ENCODE measurements at regions of chr5 and their contacts with region 1.

Region 1: DNA sequence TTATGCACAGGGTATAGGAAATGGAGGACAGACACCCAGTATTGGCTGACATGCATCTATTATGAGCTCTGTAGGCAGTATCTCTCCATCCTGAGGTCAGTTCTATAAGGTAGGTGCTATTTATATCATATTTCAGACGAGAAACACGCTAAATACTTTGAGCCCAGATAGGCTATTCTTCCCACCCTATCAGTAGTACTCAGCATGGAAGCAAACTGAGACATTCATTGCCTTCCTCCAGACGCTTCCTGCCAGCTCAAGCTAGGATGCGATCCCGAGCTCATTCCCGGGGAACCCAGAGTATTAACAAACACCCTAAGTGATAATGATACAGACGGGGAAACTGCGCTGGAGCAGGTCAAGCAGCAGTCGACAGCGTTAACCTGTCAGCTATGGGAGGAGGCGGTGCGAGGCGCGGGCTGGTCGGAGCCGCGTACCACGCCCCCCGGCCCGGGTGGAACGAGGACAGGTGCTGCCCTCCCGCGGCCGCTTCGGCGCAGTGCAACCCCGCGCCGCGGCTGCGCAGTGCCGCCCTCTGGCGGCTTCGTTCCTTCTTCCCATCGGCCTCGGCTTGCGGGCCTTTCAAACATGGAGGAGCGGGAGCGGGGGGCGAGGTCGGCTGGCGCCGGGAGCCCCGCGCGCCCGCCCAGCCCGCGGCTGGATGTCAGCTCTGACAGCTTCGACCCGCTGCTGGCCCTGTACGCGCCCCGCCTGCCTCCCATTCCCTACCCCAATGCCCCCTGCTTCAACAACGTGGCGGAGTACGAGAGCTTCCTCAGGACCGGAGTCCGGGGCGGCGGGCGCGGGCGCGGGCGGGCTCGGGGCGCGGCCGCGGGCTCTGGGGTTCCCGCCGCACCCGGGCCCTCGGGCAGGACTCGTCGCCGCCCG is at the start of gene LSM11:
- DNase-seq: peak; percentile 76 to 91 (median 84)
- H3K4me3 ChIP-seq: peak within 1 kb of the TSS; percentile 52 to 90 (median 78)
- H3K27ac ChIP-seq: peak within 1 kb of the TSS in 50 of 59 donors; percentile 12 to 87 (median 62)
- H3K27me3 ChIP-seq: no peaks in the 10 kb centered on the region
- CTCF ChIP-seq: peak in 55 of 56 donors; percentile 86 to 100 (median 100)
- total RNA-seq, gene LSM11: 6.5 to 28.4 (median 16.7) TPM

Region 2: GRCh38 chr5:157142317-157143126 is 600.9 kb before region 1 on chr5 and contains the start of gene MED7:
- intact Hi-C with region 1: loop called in 1 of 2 experiments (anchors 10 kb)
- DNase-seq: peak; percentile 71 to 96 (median 94)
- H3K4me3 ChIP-seq: peak within 1 kb of the TSS; percentile 63 to 100 (median 94)
- H3K27ac ChIP-seq: peak within 1 kb of the TSS; percentile 52 to 98 (median 89)
- H3K27me3 ChIP-seq: no peaks in the 10 kb centered on the region
- CTCF ChIP-seq: peak in 14 of 56 donors; percentile 4 to 44 (median 28)
- total RNA-seq, gene MED7: 10.1 to 23.5 (median 15.7) TPM

Region 3: DNA sequence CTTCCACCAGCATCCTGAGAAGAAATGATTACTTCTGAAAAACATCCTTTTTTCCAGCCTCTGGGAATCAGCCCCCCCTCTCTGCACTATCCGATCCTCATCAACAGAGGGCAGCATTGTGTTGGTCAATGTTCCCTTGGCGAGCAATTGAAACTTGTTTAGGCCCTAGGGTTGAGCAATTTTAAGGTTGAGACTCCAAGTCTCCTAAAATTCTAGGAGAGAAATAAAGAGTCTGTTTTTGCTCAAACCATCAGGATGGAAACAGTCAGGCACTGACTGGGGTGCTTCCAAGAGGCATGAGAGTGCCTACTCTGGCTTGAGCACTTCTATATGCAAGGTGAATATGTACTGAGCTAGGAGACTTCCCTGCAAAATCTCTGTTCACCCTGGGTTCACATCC is 489.9 kb before region 1 on chr5:
- intact Hi-C with region 1: loop called in 1 of 2 experiments (anchors 10 kb)
- DNase-seq: peak in 6 of 10 donors; percentile 39 to 69 (median 52)
- H3K4me3 ChIP-seq: peak overlapping the region in 1 of 59 donors; percentile 3
- H3K27ac ChIP-seq: peak overlapping the region in 2 of 59 donors; percentile 24 to 35
- H3K27me3 ChIP-seq: no peaks in the 10 kb centered on the region
- CTCF ChIP-seq: peak; percentile 57 to 93 (median 86)

Region 4: DNA sequence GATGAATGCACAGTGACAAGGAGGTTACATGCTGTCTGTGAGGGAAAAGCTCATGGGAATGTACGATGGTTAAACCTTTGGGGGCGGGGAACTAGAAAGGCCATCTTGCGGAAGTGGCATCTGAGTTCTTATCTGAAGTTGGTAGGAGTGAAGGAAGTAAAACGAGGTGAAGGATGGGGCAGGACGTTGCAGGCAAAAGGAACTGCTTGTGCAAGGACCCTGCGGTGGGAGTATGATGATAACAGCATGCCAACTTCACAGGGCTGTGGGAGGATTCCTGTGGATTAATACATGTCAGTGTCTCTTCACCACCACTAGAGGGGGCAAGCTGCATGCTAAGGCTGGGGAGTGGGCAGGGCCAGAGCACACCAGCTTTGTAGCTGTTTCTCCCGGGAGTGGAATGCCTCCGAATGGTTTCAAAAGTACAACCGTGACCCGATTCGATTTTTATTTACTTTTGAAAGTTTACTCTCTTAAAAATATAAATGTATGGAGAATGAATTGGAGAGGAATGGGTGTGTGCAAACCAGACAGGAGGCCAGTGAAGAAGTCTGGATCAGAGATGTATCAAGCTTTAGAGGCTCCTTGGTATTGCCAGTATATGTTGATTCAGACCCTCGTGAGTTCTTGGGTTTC is 415.0 kb before region 1 on chr5:
- intact Hi-C with region 1: loop called (anchors 2 to 10 kb)
- DNase-seq: peak in 8 of 10 donors; percentile 46 to 75 (median 67)
- H3K4me3 ChIP-seq: peak overlapping the region in 22 of 59 donors; percentile 1 to 44 (median 28)
- H3K27ac ChIP-seq: peak overlapping the region in 16 of 59 donors; percentile 0 to 60 (median 18)
- H3K27me3 ChIP-seq: no peaks in the 10 kb centered on the region
- CTCF ChIP-seq: peak; percentile 66 to 98 (median 89)

Region 5: GRCh38 chr5:157335534-157336422 is 407.6 kb before region 1 on chr5:
- intact Hi-C with region 1: loop called in 1 of 2 experiments (anchors 10 kb)
- DNase-seq: no peak
- H3K4me3 ChIP-seq: no peak overlapping the region
- H3K27ac ChIP-seq: peak overlapping the region in 19 of 59 donors; percentile 0 to 73 (median 33)
- H3K27me3 ChIP-seq: no peaks in the 10 kb centered on the region
- CTCF ChIP-seq: no peak

Region 6: GRCh38 chr5:157366741-157367674 is 376.4 kb before region 1 on chr5:
- intact Hi-C with region 1: loop called in 1 of 2 experiments (anchors 5 kb)
- DNase-seq: peak in 1 of 10 donors; percentile 39
- H3K4me3 ChIP-seq: no peak overlapping the region
- H3K27ac ChIP-seq: peak overlapping the region in 12 of 59 donors; percentile 2 to 45 (median 26)
- H3K27me3 ChIP-seq: no peaks in the 10 kb centered on the region
- CTCF ChIP-seq: peak in 54 of 56 donors; percentile 19 to 73 (median 49)

Region 7: GRCh38 chr5:157431544-157432200 is 311.7 kb before region 1 on chr5:
- intact Hi-C with region 1: loop called in 1 of 2 experiments (anchors 5 kb)
- DNase-seq: peak in 2 of 10 donors; percentile 24 to 32
- H3K4me3 ChIP-seq: peak overlapping the region in 3 of 59 donors; percentile 11 to 40 (median 23)
- H3K27ac ChIP-seq: peak overlapping the region in 29 of 59 donors; percentile 2 to 72 (median 44)
- H3K27me3 ChIP-seq: no peaks in the 10 kb centered on the region
- CTCF ChIP-seq: peak; percentile 46 to 90 (median 72)